Right cardiac atrium (tissue), 5 donors: ENCODE measurements at regions of chr15 and their contacts with region 1.

Region 1: GRCh38 chr15:38072348-38073177 is 138.1 kb downstream of the TMCO5A start:
- DNase-seq: peak; percentile 84 to 94 (median 94)
- ATAC-seq: peak; percentile 94 to 95
- H3K4me3 ChIP-seq: peak overlapping the region; percentile 58
- H3K27ac ChIP-seq: peak overlapping the region; percentile 92
- H3K4me1 ChIP-seq: peaks cover 2% of the 10 kb centered on the region
- H3K27me3 ChIP-seq: no peaks in the 10 kb centered on the region

Region 2: DNA sequence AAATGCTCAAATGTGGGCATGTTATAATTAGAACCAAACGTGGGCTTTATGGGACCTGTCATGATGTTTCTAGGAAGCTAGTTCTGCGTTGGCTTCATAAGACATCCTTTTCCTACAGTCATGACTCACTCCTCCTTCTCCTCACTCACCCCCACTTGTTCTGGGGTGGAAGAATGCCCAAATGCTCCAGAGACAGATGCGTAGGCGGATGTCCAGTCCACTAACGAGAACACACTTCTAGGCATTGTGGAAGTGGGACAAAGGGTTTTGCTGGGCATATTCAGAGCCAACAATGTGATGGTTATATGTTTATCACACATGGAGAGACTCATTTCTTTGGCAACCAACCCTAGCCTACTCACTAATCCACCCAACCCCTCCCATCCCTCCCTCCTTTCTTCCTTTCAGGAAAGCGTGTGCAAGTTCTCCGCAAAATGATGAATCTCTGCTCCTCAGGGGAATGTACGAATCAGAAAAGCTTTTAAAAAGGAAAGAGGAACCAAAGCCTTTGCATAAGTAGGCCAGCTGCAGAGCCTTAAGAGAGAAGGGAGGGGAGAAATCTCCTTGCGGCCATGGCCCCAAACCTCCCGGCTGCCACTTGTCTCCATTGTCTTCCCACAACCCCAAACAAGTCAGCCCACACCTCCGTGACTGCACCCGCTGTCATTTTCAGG is 57.1 kb after region 1 on chr15:
- intact Hi-C with region 1: loop called in 1 of 4 experiments (anchors 10 kb)
- DNase-seq: peak; percentile 69 to 79 (median 77)
- ATAC-seq: peak; percentile 87 to 92
- H3K4me3 ChIP-seq: peak overlapping the region; percentile 26
- H3K27ac ChIP-seq: peak overlapping the region; percentile 86
- H3K4me1 ChIP-seq: no peaks in the 10 kb centered on the region
- H3K27me3 ChIP-seq: no peaks in the 10 kb centered on the region